ENCODE measurements at regions of chr2 and their contacts with region 1.

Region 1: GRCh38 chr2:71798266-71799012 is 345.1 kb downstream of the DYSF start:
- DNase-seq: peak; percentile 74

Region 2: GRCh38 chr2:71393216-71393615 is 405.2 kb before region 1 on chr2:
- intact Hi-C with region 1: no loop called
- DNase-seq: no peak

Region 3: DNA sequence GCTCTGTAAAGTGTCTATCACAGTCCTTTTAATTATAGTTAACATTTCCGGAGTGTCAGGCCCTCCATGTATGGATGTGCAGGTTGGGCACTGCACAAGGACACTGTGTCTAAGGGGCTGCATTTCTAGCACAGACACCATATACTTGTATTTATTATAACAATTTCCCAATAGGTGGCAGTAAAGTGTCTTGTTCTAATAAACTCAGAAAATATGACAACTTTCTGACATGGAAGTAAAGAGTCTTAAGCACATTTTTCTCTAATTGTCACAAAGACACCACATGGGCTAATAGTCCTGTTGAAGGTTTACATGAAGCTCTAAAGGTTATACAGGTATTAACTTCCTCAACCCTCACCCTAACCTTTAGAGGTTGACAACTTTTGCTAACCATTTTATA is 188.5 kb before region 1 on chr2:
- intact Hi-C with region 1: loop called (anchors 2 kb)
- DNase-seq: no peak

Region 4: GRCh38 chr2:71716781-71717624 is 81.4 kb before region 1 on chr2:
- intact Hi-C with region 1: loop called (anchors 5 kb)
- DNase-seq: peak; percentile 95

Region 5: DNA sequence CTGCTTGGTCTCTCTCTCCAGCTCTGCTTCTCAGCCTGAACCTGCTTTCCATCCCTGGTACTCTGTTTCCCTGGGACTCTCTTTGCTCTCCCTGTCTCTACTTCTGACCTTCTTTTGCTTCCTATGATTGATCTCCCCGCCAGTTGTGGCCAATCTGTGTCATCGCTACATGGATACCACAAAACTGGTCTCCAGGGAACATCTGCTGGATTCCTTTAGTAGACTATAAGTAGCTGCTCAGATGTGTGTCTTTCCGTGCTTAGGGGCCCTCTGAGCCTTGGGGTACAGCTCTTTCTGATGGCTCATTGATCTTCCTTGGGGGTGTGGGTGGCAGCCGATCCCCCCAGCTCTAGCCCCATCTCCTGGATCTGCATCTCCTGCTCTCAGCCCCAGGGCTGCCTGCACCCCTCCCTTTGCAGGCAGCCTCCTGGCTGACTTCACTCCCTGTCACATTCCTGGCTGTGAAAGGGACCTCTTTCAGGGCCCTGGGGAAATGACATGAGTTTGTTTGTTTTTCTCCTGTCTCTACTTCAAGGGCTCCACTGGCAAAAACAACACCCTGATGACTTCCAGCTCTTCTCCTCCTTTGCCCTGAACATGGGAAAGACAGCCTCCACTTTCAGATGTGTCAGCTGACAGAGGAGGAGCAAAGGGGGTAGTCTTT is 15.5 kb after region 1 on chr2:
- intact Hi-C with region 1: no loop called
- DNase-seq: no peak

Region 6: DNA sequence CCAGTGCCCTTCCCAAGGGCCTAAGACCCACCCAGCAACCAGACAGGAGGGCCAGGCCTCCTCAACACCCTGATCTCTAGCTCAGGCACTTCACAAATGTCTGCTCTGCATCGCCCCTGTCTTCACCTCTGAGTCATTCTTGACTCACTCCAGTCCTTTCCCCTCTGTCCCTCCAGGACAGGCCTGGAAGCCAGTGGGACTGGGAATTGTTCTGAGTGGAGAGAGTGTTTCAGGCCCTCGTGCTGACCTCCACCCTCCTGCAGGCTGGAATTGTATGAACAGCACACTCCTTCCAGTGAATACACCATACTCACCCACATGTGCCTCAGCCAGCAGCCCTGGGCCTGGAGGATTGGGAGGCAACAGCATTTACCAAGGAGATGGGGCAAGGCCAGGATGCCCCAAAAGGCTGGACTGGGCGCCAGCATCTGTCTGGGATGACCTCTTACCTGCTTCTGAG is 45.0 kb after region 1 on chr2:
- intact Hi-C with region 1: no loop called
- DNase-seq: no peak

Region 7: GRCh38 chr2:71995067-71995665 is 196.7 kb after region 1 on chr2:
- intact Hi-C with region 1: loop called (anchors 2 kb)
- DNase-seq: no peak

Region 8: GRCh38 chr2:72023678-72024390 is 225.4 kb after region 1 on chr2:
- intact Hi-C with region 1: no loop called
- DNase-seq: peak; percentile 55

Region 9: DNA sequence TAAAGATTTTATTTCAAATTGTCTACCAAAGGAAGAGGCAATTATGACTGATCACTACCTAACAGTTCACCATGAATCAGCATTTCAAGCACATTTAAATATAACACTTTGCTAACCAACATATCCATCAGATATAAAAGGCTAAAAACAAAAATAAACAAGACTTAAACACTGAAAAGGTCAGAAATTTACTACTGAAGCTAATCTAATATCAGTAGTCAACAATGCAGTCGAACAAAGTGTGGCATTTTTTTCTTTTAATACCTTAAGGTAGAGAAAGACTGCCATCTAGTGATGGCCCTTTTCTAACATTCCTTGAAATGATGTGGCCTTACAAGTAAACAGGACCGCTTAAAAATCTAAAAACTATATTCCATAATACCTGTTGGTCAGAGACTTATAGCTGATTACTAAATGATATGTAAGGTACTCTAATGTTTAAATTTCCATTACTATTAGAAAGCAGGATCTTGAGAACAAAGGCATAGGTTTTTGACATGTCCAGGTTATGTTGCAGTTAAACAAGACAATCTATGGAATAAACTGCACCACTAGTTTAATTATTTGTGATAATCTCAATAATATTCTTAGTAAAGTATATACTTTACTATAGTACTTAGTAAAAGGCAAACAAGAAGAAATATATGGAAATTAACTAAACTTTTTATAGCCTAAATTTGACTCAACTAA is 947.4 kb after region 1 on chr2:
- intact Hi-C with region 1: loop called (anchors 5 kb)
- DNase-seq: no peak